ENCODE measurements at regions of chr19 and their contacts with region 1.

Region 1: DNA sequence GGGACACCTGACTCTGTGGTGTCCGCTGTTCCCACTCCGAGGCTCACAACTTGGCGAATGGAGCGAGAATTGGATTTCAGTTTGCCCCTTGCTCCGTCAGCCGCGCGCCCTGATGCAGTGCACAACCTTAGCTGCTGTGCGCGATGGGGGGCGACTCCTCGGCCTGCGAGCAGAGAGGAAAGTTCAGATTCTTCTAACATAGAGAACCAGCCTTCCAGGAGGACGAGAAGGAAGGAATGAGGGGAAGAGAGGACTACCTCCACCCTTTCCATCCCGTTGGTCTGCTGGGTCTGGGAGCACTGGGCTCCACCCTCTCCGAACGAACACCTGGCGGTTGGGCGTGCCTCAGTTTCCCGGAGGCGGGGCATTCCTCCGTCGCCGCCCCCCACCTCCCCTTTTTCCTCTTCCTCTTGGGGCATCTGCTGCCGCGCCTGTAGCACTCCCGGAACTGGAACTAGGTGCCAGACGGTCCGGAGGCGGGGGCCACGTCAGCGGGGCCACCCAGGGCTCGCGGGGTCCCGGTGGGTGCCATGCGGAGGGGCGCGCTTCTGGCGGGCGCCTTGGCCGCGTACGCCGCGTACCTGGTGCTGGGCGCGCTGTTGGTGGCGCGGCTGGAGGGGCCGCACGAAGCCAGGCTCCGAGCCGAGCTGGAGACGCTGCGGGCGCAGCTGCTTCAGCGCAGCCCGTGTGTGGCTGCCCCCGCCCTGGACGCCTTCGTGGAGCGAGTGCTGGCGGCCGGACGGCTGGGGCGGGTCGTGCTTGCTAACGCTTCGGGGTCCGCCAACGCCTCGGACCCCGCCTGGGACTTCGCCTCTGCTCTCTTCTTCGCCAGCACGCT is at the start of gene KCNK6:
- DNase-seq: no peak
- H3K4me3 ChIP-seq: peak within 1 kb of the TSS; percentile 66 to 83
- H3K27ac ChIP-seq: peak within 1 kb of the TSS; percentile 92
- H3K4me1 ChIP-seq: peaks cover 73% of the 10 kb centered on the region
- H3K27me3 ChIP-seq: no peaks in the 10 kb centered on the region
- CTCF ChIP-seq: no peak
- POLR2A ChIP-seq: peak in 1 of 2 donors; percentile 48
- total RNA-seq, gene KCNK6: 16.2 TPM

Region 2: GRCh38 chr19:38245826-38246498 is 73.7 kb before region 1 on chr19:
- intact Hi-C with region 1: loop called (anchors 5 kb)
- DNase-seq: no peak
- H3K4me3 ChIP-seq: no peak overlapping the region
- H3K27ac ChIP-seq: no peak overlapping the region
- H3K4me1 ChIP-seq: peaks cover 8% of the 10 kb centered on the region
- H3K27me3 ChIP-seq: no peaks in the 10 kb centered on the region
- CTCF ChIP-seq: no peak
- POLR2A ChIP-seq: no peak

Region 3: DNA sequence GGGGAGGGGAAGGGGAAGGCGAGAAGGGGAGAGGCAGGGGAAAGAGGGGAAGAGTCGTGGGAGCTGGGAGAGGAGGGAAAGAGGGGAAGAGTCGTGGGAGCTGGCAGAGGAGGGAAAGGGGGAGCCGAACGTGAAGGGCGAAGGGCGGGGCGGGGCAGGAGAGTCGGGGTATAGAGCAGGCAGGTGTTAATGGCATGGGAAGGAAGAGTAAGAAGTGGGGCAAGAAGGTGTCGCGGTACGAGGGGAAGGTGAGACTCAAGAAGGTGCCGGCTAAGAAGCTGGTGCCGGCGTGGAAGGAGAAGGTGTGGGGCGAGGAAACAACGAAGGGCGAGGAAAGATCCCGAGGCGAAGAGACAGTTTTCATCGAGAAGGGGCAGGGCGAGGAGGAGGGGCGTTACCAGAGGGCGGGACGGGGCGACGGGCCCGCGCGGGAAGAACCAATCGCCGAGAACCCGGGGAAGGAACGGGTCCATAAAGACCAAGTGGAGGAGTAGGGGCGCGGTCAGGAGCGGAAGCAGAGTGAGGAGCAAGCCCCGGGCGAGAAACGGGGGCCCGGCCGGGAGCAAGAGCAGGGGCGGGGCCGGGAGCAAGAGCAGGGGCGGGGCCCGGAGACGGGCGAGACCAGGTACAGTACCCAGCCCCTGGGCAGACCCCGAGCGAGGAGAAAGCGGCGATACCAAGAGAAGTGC is 16.5 kb after region 1 on chr19:
- intact Hi-C with region 1: loop called (anchors 1 kb)
- DNase-seq: peak in 1 of 2 donors; percentile 97
- H3K4me3 ChIP-seq: peak overlapping the region; percentile 69 to 72
- H3K27ac ChIP-seq: peak overlapping the region; percentile 99
- H3K4me1 ChIP-seq: peaks cover 8% of the 10 kb centered on the region
- H3K27me3 ChIP-seq: no peaks in the 10 kb centered on the region
- CTCF ChIP-seq: no peak
- POLR2A ChIP-seq: peak in 1 of 2 donors; percentile 37

Region 4: GRCh38 chr19:38402967-38403861 is 83.6 kb after region 1 on chr19 and contains the start of gene FAM98C:
- intact Hi-C with region 1: no loop called
- DNase-seq: peak in 1 of 2 donors; percentile 98
- H3K4me3 ChIP-seq: peak within 1 kb of the TSS; percentile 96 to 98
- H3K27ac ChIP-seq: peak within 1 kb of the TSS; percentile 96
- H3K4me1 ChIP-seq: peaks cover 22% of the 10 kb centered on the region
- H3K27me3 ChIP-seq: no peaks in the 10 kb centered on the region
- CTCF ChIP-seq: peak; percentile 97 to 100 (median 98)
- POLR2A ChIP-seq: no peak
- total RNA-seq, gene FAM98C: 32.7 TPM